WTC11 (cell line): ENCODE measurements at regions of chr18 and their contacts with region 1.

Region 1: DNA sequence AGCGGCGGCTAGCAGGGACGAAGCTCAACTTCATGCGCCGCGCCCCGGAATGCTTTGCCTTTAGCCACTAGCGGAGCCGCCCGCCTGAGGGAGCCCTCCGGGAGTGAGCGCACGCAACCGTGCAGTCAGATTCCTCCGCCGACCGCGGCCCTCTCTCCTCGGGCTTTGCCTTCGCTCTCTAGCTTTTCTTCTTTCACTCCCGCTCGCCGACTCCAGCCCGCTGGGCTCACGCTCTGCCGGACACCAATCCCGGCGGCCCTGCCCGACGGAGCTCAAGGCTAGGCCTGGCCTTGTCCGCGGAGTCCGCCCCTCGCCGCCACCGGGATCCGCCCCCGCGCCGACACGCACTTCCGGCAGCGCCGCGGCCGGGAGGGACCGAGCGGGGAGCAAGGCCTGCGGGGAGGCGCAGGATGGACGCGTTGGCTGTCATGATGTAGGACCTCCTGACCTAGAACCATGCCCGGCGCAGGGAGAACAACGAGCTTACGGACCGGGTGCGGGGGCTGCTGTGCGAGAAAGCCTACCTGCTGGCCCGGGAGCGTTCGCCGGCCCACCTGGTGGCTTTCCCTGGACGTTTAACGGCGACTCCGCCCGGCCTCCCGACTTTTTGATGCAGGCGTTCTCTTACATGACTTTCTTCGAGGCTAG is 40.8 kb upstream of the AKAIN1 start:
- DNase-seq: peak; percentile 82
- ATAC-seq: peak; percentile 92
- H3K4me3 Mint-ChIP-seq: peak overlapping the region; percentile 95
- H3K27ac Mint-ChIP-seq: peak overlapping the region; percentile 92
- H3K4me1 Mint-ChIP-seq: peaks cover 20% of the 10 kb centered on the region
- H3K27me3 Mint-ChIP-seq: peaks cover 16% of the 10 kb centered on the region
- CTCF ChIP-seq: no peak

Region 2: GRCh38 chr18:5268874-5269273 is 31.0 kb after region 1 on chr18:
- CTCF ChIA-PET with region 1: no interaction called
- POLR2A ChIA-PET with region 1: no interaction called
- DNase-seq: no peak
- ATAC-seq: no peak
- H3K4me3 Mint-ChIP-seq: no peak overlapping the region
- H3K27ac Mint-ChIP-seq: no peak overlapping the region
- H3K4me1 Mint-ChIP-seq: peaks cover 7% of the 10 kb centered on the region
- H3K27me3 Mint-ChIP-seq: peaks cover 11% of the 10 kb centered on the region
- CTCF ChIP-seq: no peak

Region 3: DNA sequence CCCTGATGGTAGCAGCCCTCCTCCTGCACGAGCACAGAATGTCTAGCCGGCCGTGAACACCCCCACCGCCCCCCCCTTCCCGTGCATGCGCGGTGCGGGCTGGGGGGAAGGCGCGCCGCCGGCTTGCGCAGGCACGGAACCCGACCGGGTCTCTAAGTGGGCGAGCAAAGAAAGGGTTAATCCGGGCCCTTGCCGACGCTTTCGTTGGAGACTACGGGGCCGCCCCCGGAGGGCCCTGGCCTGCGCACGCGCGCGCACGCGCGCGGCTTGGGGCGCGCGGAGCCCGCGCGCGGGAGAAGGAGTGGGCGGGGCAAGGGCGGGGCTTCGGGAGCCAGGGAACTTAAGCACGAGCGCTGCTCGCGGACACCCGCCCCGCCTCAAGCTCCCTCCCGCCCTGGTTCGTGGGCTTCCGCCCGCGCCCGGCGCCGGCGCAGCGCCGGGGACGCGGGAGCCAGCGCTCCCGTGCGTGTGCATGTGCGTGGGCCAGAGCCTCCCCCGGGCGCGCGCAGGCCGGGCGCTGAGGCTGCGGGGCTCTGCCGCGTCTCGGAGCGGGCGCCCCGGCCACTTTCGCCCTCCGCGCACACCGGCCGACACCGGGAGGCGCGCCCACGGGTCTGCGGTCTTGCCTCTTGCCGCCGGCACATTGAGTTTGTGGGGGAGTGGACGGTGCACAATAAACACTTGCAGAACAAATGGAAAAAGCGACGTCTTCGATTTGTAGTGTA is 58.3 kb after region 1 on chr18:
- CTCF ChIA-PET with region 1: interaction called, 8 read pairs
- POLR2A ChIA-PET with region 1: interaction called, 25 read pairs
- DNase-seq: peak; percentile 90
- ATAC-seq: peak; percentile 61
- H3K4me3 Mint-ChIP-seq: peak overlapping the region; percentile 90
- H3K27ac Mint-ChIP-seq: peak overlapping the region; percentile 97
- H3K4me1 Mint-ChIP-seq: peaks cover 22% of the 10 kb centered on the region
- H3K27me3 Mint-ChIP-seq: peaks cover 31% of the 10 kb centered on the region
- CTCF ChIP-seq: no peak